Motor neuron (in vitro differentiated cells): ENCODE measurements at regions of chr2 and their contacts with region 1.

Region 1: GRCh38 chr2:134118279-134119116 is 135.4 kb upstream of the MGAT5 start:
- ATAC-seq: peak; percentile 19 to 39 (median 36)
- H3K4me3 ChIP-seq: no peak overlapping the region
- H3K27ac ChIP-seq: no peak overlapping the region
- H3K4me1 ChIP-seq: peaks cover 14 to 22% of the 10 kb centered on the region in 2 donors

Region 2: GRCh38 chr2:133886735-133887660 is 231.5 kb before region 1 on chr2:
- in situ Hi-C with region 1: loop called in 2 of 9 experiments (anchors 10 to 25 kb)
- ATAC-seq: peak; percentile 50 to 88 (median 77)
- H3K4me3 ChIP-seq: no peak overlapping the region
- H3K27ac ChIP-seq: no peak overlapping the region
- H3K4me1 ChIP-seq: peaks cover 3 to 6% of the 10 kb centered on the region in 2 donors

Region 3: DNA sequence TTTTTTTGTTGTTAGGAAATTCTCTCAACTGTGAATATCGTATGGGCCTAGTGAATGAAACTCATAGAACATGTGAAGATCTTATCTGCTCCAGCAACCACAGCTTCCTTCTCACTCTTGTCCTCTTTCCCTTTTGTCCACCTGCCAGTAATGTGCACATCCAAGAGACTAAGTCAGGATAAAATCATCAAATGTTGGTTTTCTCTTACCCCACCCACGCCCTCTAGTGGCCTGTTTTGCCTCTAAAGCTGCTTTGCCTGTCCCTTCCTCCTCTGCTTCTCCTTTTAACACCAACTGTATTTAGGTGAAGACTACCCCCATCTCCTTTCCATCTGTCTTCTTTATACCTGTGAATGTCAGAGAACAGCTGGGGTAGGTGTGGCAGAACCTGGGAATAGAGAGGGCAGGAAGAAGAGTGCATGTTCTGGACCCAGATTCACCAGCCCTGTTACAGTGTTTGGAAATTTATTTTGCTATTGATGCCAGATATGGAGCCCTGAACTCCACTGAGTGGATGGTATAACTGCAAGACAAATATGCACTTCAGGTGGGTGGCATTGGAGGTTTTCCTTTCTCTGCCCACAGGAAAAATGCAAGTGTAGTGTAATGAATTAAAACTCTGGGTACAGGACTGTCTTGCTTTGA is 127.0 kb after region 1 on chr2:
- in situ Hi-C with region 1: loop called in 2 of 9 experiments (anchors 25 kb)
- ATAC-seq: peak; percentile 35 to 76 (median 62)
- H3K4me3 ChIP-seq: no peak overlapping the region
- H3K27ac ChIP-seq: no peak overlapping the region
- H3K4me1 ChIP-seq: peaks cover 5 to 12% of the 10 kb centered on the region in 2 donors

Region 4: DNA sequence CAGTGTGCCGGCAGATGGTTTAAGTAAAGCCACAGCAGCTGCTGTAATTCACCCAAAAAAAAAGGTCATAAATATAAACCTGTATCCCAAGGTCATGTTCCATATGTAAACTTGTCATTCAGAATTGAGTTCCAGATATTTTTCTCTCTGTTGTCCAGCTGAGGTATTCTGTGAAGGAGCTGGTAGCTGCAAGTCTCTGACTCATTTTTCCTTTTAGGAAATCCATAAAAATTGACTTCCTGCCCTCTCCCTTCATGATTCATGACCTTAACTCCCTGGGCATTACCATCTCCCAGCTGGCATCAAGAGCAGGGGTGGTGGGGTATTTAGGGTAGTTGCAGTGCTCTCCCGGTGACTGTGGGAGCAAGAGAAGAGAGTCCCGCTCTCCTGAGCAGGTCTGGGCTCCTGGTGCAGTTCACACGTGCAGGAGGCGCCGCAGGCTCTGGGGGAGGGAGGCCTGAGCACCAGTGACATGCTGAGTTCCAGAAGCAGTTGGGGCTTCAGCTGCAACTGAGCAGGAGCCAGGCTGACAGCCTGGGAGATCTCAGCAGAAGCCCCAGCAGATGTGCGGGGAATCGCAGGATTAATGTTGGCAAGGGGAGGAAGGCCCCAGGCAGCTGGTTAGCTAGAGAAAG is 328.0 kb after region 1 on chr2:
- in situ Hi-C with region 1: loop called in 2 of 9 experiments (anchors 25 kb)
- ATAC-seq: peak in 5 of 8 experiments; percentile 9 to 56 (median 44)
- H3K4me3 ChIP-seq: no peak overlapping the region
- H3K27ac ChIP-seq: peak overlapping the region; percentile 62 to 72
- H3K4me1 ChIP-seq: peaks cover 16 to 17% of the 10 kb centered on the region in 2 donors

Region 5: GRCh38 chr2:134918526-134919340 is 800.2 kb after region 1 on chr2 and contains the start of gene CCNT2:
- in situ Hi-C with region 1: loop called in 2 of 9 experiments (anchors 25 kb)
- ATAC-seq: peak; percentile 75 to 89 (median 84)
- H3K4me3 ChIP-seq: peak within 1 kb of the TSS; percentile 62 to 92 (median 75)
- H3K27ac ChIP-seq: peak within 1 kb of the TSS; percentile 94 to 96
- H3K4me1 ChIP-seq: peaks cover 5 to 14% of the 10 kb centered on the region in 2 donors
- total RNA-seq, gene CCNT2: 23.6 to 52.6 (median 45.3) TPM